Right ventricle myocardium inferior (tissue), 1 donor: ENCODE measurements at regions of chr1 and their contacts with region 1.

Region 1: GRCh38 chr1:67053785-67054772 is at the start of gene SLC35D1:
- DNase-seq: peak; percentile 89
- ATAC-seq: peak; percentile 89
- total RNA-seq, gene SLC35D1: 3.2 TPM

Region 2: GRCh38 chr1:67001682-67002425 is 52.2 kb before region 1 on chr1:
- intact Hi-C with region 1: loop called (anchors 5 kb)
- DNase-seq: no peak
- ATAC-seq: peak; percentile 86